Activated B cell treated with CpG ODN at 0.5 μM for 24 hours (primary cell): ENCODE measurements at regions of chr1 and their contacts with region 1.

Region 1: GRCh38 chr1:54764133-54764921 is at the start of gene PARS2:
- DNase-seq: peak; percentile 91
- ATAC-seq: peak; percentile 92
- H3K4me3 Mint-ChIP-seq: peak within 1 kb of the TSS; percentile 90
- H3K27ac Mint-ChIP-seq: peak within 1 kb of the TSS; percentile 89
- H3K4me1 Mint-ChIP-seq: peaks cover 24% of the 10 kb centered on the region
- H3K27me3 Mint-ChIP-seq: no peaks in the 10 kb centered on the region
- CTCF ChIP-seq: no peak
- total RNA-seq, gene PARS2: 4.3 and 4.8 TPM in 2 replicates

Region 2: DNA sequence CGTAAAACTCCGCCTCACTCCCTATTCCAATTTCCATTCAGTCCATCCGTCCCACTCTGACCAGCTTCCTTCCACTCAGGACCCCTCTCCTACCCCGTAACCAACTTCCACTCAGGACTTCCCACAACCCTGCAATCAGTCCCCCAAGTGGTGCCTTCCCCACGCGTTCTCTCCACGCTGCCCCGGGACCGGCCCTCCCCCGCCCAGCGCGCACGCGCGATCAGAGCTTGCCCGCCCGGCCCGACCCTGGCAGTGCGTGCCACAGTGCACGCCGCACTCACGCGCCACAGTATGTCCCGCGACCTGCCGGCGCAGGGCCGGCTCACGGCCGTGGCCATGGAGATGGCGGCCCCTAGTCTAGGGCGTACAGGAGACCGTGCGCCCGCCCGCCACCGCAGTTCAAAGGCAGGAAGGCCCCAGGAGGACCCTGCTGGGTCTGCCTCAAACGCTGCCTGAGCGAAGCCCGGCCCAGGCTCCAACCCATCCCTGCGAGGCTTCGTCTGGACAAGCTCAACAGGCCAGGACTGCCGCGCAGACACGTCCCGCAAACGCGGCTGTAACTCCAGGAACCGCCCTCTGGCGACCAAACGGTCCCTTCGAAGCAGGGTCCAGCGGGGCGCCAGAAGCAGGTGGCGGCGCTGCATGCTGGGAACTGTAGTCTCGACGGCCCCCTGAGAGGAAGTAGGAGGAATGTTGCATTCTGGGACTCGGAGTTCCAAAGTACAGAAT is 926.2 kb before region 1 on chr1 and contains the start of gene NDC1:
- CTCF ChIA-PET with region 1: no interaction called
- POLR2A ChIA-PET with region 1: no interaction called
- intact Hi-C with region 1: loop called (anchors 1 kb)
- DNase-seq: peak; percentile 86
- ATAC-seq: peak; percentile 89
- H3K4me3 Mint-ChIP-seq: peak within 1 kb of the TSS; percentile 94
- H3K27ac Mint-ChIP-seq: peak within 1 kb of the TSS; percentile 98
- H3K4me1 Mint-ChIP-seq: peaks cover 33% of the 10 kb centered on the region
- H3K27me3 Mint-ChIP-seq: no peaks in the 10 kb centered on the region
- CTCF ChIP-seq: no peak
- total RNA-seq, gene NDC1: 10.6 and 14.0 TPM in 2 replicates

Region 3: GRCh38 chr1:54199765-54200518 is 564.4 kb before region 1 on chr1 and contains the starts of genes CYB5RL and MRPL37:
- CTCF ChIA-PET with region 1: no interaction called
- POLR2A ChIA-PET with region 1: no interaction called
- intact Hi-C with region 1: loop called (anchors 1 kb)
- DNase-seq: peak; percentile 74
- ATAC-seq: peak; percentile 99
- H3K4me3 Mint-ChIP-seq: peak within 1 kb of the TSS; percentile 92
- H3K27ac Mint-ChIP-seq: peak within 1 kb of the TSS; percentile 81
- H3K4me1 Mint-ChIP-seq: peaks cover 32% of the 10 kb centered on the region
- H3K27me3 Mint-ChIP-seq: no peaks in the 10 kb centered on the region
- CTCF ChIP-seq: no peak
- total RNA-seq, gene CYB5RL: 8.4 and 8.7 TPM in 2 replicates
- total RNA-seq, gene MRPL37: 62.5 and 64.1 TPM in 2 replicates

Region 4: GRCh38 chr1:54800899-54801759 is 36.8 kb after region 1 on chr1 and contains the start of gene TTC22:
- CTCF ChIA-PET with region 1: interaction called, 5 read pairs
- POLR2A ChIA-PET with region 1: interaction called, 3 read pairs
- intact Hi-C with region 1: loop called (anchors 1 kb)
- DNase-seq: peak; percentile 67
- ATAC-seq: peak; percentile 90
- H3K4me3 Mint-ChIP-seq: peak within 1 kb of the TSS; percentile 90
- H3K27ac Mint-ChIP-seq: peak within 1 kb of the TSS; percentile 83
- H3K4me1 Mint-ChIP-seq: peaks cover 29% of the 10 kb centered on the region
- H3K27me3 Mint-ChIP-seq: no peaks in the 10 kb centered on the region
- CTCF ChIP-seq: no peak
- total RNA-seq, gene TTC22: 4.9 and 6.0 TPM in 2 replicates

Region 5: DNA sequence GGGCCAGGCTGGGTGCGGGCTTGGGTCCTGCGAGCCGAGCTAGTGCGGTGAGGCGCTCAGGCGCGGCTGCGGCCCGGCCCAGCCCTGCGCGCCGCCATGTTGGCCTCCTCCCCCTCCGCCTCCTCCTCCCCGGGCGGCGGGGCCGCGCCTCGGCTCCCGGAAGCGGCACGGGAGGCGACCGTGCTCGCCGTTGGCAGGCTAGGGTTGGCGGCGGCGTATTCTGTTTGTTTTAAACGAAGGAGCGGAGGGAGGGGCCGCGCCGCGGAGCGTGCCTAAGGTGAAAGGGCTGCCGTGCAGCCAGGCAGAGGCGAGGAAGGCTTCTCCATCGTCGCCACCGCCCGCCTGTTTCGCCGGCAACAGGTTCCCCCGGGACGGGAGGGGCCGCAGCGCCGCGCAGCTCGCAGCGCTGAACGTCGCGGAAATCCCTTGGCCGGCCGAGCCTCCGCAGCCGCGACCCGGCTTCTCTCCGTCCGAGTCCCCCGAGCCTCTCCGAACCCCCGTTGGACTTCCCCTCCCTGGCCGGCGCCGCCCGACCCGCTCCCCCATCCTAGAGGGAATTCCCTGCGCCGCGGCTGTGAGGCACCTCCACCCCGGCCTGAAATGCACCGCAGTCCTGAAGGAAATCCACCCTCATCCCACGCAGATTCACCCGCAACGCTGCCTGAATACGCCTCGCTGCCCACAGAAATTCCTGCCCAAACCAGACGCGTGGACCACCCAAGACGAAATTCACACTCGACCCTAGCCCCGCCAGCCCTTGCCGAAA is 451.1 kb after region 1 on chr1 and contains the start of gene USP24:
- CTCF ChIA-PET with region 1: no interaction called
- POLR2A ChIA-PET with region 1: no interaction called
- intact Hi-C with region 1: loop called (anchors 10 kb)
- DNase-seq: peak; percentile 79
- ATAC-seq: peak; percentile 76
- H3K4me3 Mint-ChIP-seq: peak within 1 kb of the TSS; percentile 92
- H3K27ac Mint-ChIP-seq: peak within 1 kb of the TSS; percentile 97
- H3K4me1 Mint-ChIP-seq: peaks cover 65% of the 10 kb centered on the region
- H3K27me3 Mint-ChIP-seq: no peaks in the 10 kb centered on the region
- CTCF ChIP-seq: no peak
- total RNA-seq, gene USP24: 91.4 and 93.2 TPM in 2 replicates